ENCODE measurements at regions of chr14 and their contacts with region 1.

Region 1: DNA sequence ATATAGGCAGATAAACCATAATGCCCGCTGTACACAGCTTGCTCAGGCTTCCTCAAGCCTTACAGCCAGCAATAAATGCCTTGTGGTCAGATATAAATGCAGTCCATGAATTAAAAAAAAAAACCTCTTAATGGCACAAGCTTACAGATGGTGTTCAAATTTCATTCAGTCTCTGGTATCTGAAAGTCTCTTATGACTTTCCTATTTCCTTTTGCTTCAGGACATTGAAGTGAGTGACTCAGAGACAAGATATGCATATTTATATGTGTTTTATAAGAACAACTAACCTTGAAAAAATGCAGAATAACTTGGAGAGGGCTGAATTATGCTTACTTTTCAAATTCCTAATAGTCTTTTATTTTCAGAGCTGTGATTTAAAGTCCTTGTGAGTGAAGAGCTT is 426.9 kb upstream of the MIS18BP1 start:
- DNase-seq: peak; percentile 95
- ATAC-seq: peak; percentile 94
- H3K4me3 ChIP-seq: peak overlapping the region; percentile 17; the same call in 1 of the 2 replicates
- H3K27ac ChIP-seq: peak overlapping the region; percentile 40
- H3K4me1 ChIP-seq: peaks cover 37% of the 10 kb centered on the region
- H3K27me3 ChIP-seq: no peaks in the 10 kb centered on the region
- CTCF ChIP-seq: no peak

Region 2: GRCh38 chr14:45290547-45290946 is 389.3 kb before region 1 on chr14:
- CTCF ChIA-PET with region 1: no interaction called
- POLR2A ChIA-PET with region 1: no interaction called
- intact Hi-C with region 1: loop called (anchors 5 kb)
- DNase-seq: no peak
- ATAC-seq: no peak
- H3K4me3 ChIP-seq: no peak overlapping the region
- H3K27ac ChIP-seq: no peak overlapping the region
- H3K4me1 ChIP-seq: no peaks in the 10 kb centered on the region
- H3K27me3 ChIP-seq: peaks cover 9% of the 10 kb centered on the region
- CTCF ChIP-seq: no peak

Region 3: DNA sequence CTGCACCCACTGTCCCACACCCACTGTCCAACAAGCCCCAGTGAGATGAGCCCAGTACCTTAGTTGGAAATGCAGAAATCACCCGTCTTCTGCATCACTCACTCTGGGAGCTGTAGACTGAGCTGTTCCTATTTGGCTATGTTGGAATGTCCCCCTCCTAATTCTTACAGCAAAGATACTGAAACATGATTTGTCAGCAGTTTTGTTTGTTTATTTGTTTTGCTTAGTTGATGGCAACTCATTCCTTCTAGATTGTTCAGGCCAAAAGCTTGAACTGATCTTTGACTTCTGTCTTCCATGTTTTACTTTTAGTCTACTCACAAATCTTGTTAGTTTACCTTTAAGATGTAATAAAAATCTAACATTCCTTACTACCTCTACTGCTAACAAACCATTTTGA is 193.3 kb before region 1 on chr14:
- CTCF ChIA-PET with region 1: no interaction called
- POLR2A ChIA-PET with region 1: no interaction called
- intact Hi-C with region 1: no loop called
- DNase-seq: no peak
- ATAC-seq: no peak
- H3K4me3 ChIP-seq: no peak overlapping the region
- H3K27ac ChIP-seq: no peak overlapping the region
- H3K4me1 ChIP-seq: no peaks in the 10 kb centered on the region
- H3K27me3 ChIP-seq: no peaks in the 10 kb centered on the region
- CTCF ChIP-seq: no peak

Region 4: GRCh38 chr14:45716572-45716971 is 36.7 kb after region 1 on chr14:
- CTCF ChIA-PET with region 1: interaction called, 3 read pairs
- POLR2A ChIA-PET with region 1: no interaction called
- intact Hi-C with region 1: loop called (anchors 1 kb)
- DNase-seq: peak; percentile 50
- ATAC-seq: peak; percentile 81
- H3K4me3 ChIP-seq: no peak overlapping the region
- H3K27ac ChIP-seq: no peak overlapping the region
- H3K4me1 ChIP-seq: peaks cover 5% of the 10 kb centered on the region; the same call in 1 of the 2 replicates
- H3K27me3 ChIP-seq: peaks cover 21% of the 10 kb centered on the region
- CTCF ChIP-seq: peak; percentile 62

Region 5: DNA sequence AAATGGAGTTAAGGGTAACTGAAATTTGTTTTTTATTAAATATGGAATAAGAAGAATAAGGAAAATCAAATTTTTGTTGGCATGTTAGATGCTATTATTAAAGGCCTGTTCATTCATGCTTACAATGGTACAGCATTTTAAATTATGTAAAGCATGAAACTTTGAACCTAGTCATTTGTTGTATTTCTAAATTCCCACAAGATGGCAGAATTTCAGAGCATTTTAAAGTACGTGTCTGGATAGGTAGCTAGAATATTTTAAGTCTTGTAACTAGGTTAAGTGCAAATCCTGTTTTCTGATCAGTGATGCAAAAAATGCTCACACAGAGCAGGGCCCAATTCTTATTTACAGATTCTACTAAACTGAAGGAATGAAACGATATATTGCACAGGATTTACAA is 158.7 kb after region 1 on chr14:
- CTCF ChIA-PET with region 1: no interaction called
- POLR2A ChIA-PET with region 1: no interaction called
- intact Hi-C with region 1: loop called (anchors 5 kb)
- DNase-seq: peak; percentile 57
- ATAC-seq: no peak
- H3K4me3 ChIP-seq: no peak overlapping the region
- H3K27ac ChIP-seq: no peak overlapping the region
- H3K4me1 ChIP-seq: no peaks in the 10 kb centered on the region
- H3K27me3 ChIP-seq: peaks cover 55% of the 10 kb centered on the region
- CTCF ChIP-seq: peak; percentile 64

Region 6: DNA sequence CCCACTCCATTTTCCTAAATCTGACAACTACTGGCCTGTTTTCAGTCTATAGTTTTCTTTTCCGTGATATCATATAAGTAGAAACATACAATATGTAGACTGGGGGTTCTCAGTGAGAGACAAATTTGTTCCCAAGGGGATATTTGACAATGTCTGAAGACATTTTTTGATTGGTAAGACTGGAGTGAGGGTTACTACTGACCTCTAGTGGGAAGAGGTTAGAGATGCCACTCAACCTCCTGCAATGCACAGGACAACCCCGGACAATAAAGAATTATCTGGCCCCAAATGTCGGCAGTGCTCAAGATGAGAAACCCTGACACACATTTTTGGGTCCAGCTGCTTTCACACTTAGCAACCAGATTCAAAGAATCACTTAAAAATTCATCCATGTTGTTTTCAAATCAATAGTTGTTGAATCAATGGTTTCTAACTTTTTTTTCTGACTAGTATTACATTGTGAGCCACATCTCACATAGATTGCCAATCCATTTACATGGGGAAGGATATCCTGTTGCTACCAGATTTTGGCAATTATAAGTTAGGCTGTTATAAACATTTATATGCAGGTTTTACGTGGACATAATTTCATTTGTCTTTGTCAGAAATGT is 664.6 kb after region 1 on chr14:
- CTCF ChIA-PET with region 1: no interaction called
- POLR2A ChIA-PET with region 1: no interaction called
- intact Hi-C with region 1: loop called (anchors 1 kb)
- DNase-seq: peak; percentile 64
- ATAC-seq: peak; percentile 93
- H3K4me3 ChIP-seq: no peak overlapping the region
- H3K27ac ChIP-seq: no peak overlapping the region
- H3K4me1 ChIP-seq: no peaks in the 10 kb centered on the region
- H3K27me3 ChIP-seq: peaks cover 7% of the 10 kb centered on the region; the same call in 1 of the 2 replicates
- CTCF ChIP-seq: peak; percentile 81